ENCODE measurements at regions of chr9 and their contacts with region 1.

Region 1: GRCh38 chr9:96654443-96655197 is 497 bp downstream of the PRXL2C start:
- DNase-seq: peak; percentile 65 to 94 (median 86)
- ATAC-seq: peak; percentile 89
- H3K4me3 ChIP-seq: peak overlapping the region; percentile 62
- H3K4me3 Mint-ChIP-seq: peak overlapping the region; percentile 88 to 98 (median 93)
- H3K27ac ChIP-seq: peak overlapping the region; percentile 87
- H3K27ac Mint-ChIP-seq: peak overlapping the region; percentile 88 to 98 (median 97)
- H3K4me1 ChIP-seq: peaks cover 0 to 14% of the 10 kb centered on the region in 2 donors
- H3K4me1 Mint-ChIP-seq: peaks cover 0 to 33% (median 21%) of the 10 kb centered on the region in 7 donors
- H3K27me3 ChIP-seq: no peaks in the 10 kb centered on the region
- H3K27me3 Mint-ChIP-seq: peaks cover 0 to 23% (median 0%) of the 10 kb centered on the region in 5 donors

Region 2: DNA sequence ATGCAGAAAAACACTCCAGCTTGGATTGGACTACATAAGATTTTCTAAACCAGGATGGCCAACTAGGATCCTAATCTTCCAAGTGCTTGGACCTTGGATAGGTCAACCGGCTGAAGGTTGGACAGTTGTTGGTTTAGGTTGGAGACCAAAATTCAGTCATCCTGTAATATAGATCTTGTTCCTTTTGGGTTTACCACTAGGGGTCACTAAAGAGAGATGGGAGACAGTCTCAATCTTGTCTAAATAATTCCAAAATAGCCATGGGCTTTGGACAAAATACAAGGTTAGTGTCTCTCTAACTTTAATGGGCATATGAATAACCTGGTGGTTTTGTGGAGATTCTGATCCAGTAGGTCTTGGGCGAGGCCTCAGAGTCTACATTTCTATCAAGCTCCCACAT is 927.9 kb before region 1 on chr9:
- CTCF ChIA-PET with region 1: no interaction called
- POLR2A ChIA-PET with region 1: no interaction called
- intact Hi-C with region 1: loop called in 1 of 2 experiments (anchors 10 kb)
- DNase-seq: peak in 1 of 9 donors; percentile 31
- ATAC-seq: no peak
- H3K4me3 ChIP-seq: no peak overlapping the region
- H3K4me3 Mint-ChIP-seq: peak overlapping the region in 1 of 10 donors; percentile 20
- H3K27ac ChIP-seq: no peak overlapping the region
- H3K27ac Mint-ChIP-seq: no peak overlapping the region
- H3K4me1 ChIP-seq: peaks cover 18 to 24% of the 10 kb centered on the region in 2 donors
- H3K4me1 Mint-ChIP-seq: peaks cover 33 to 58% (median 49%) of the 10 kb centered on the region in 7 donors
- H3K27me3 ChIP-seq: no peaks in the 10 kb centered on the region
- H3K27me3 Mint-ChIP-seq: peaks cover 0 to 31% (median 0%) of the 10 kb centered on the region in 5 donors

Region 3: GRCh38 chr9:96241391-96241809 is 413.2 kb before region 1 on chr9:
- CTCF ChIA-PET with region 1: no interaction called
- POLR2A ChIA-PET with region 1: no interaction called
- intact Hi-C with region 1: loop called in 1 of 2 experiments (anchors 5 kb)
- DNase-seq: peak in 1 of 9 donors; percentile 65
- ATAC-seq: peak; percentile 46
- H3K4me3 ChIP-seq: no peak overlapping the region
- H3K4me3 Mint-ChIP-seq: peak overlapping the region in 1 of 10 donors; percentile 17
- H3K27ac ChIP-seq: no peak overlapping the region
- H3K27ac Mint-ChIP-seq: peak overlapping the region in 1 of 9 donors; percentile 49
- H3K4me1 ChIP-seq: peaks cover 0 to 15% of the 10 kb centered on the region in 2 donors
- H3K4me1 Mint-ChIP-seq: peaks cover 0 to 16% (median 4%) of the 10 kb centered on the region in 7 donors
- H3K27me3 ChIP-seq: peaks cover 0 to 13% of the 10 kb centered on the region in 2 donors
- H3K27me3 Mint-ChIP-seq: peaks cover 17 to 72% (median 27%) of the 10 kb centered on the region in 5 donors

Region 4: GRCh38 chr9:96418074-96418809 is 236.4 kb before region 1 on chr9 and contains the start of gene ZNF367:
- CTCF ChIA-PET with region 1: no interaction called
- POLR2A ChIA-PET with region 1: no interaction called
- intact Hi-C with region 1: loop called (anchors 1 kb)
- DNase-seq: peak; percentile 75 to 94 (median 82)
- ATAC-seq: peak; percentile 85
- H3K4me3 ChIP-seq: peak within 1 kb of the TSS; percentile 94
- H3K4me3 Mint-ChIP-seq: peak within 1 kb of the TSS; percentile 88 to 98 (median 92)
- H3K27ac ChIP-seq: peak within 1 kb of the TSS; percentile 98
- H3K27ac Mint-ChIP-seq: peak within 1 kb of the TSS; percentile 92 to 98 (median 96)
- H3K4me1 ChIP-seq: peaks cover 19 to 31% of the 10 kb centered on the region in 2 donors
- H3K4me1 Mint-ChIP-seq: peaks cover 21 to 39% (median 31%) of the 10 kb centered on the region in 7 donors
- H3K27me3 ChIP-seq: no peaks in the 10 kb centered on the region
- H3K27me3 Mint-ChIP-seq: no peaks in the 10 kb centered on the region
- total RNA-seq, gene ZNF367: 3.8 to 22.9 (median 5.5) TPM

Region 5: GRCh38 chr9:96449845-96450612 is 204.6 kb before region 1 on chr9 and contains the start of gene HABP4:
- CTCF ChIA-PET with region 1: no interaction called
- POLR2A ChIA-PET with region 1: interaction called, 3 read pairs
- intact Hi-C with region 1: loop called in 1 of 2 experiments (anchors 1 kb)
- DNase-seq: peak; percentile 90 to 97 (median 95)
- ATAC-seq: peak; percentile 98
- H3K4me3 ChIP-seq: peak within 1 kb of the TSS; percentile 77
- H3K4me3 Mint-ChIP-seq: peak within 1 kb of the TSS; percentile 88 to 99 (median 93)
- H3K27ac ChIP-seq: peak within 1 kb of the TSS; percentile 74
- H3K27ac Mint-ChIP-seq: peak within 1 kb of the TSS; percentile 74 to 98 (median 94)
- H3K4me1 ChIP-seq: peaks cover 5 to 14% of the 10 kb centered on the region in 2 donors
- H3K4me1 Mint-ChIP-seq: peaks cover 19 to 33% (median 26%) of the 10 kb centered on the region in 7 donors
- H3K27me3 ChIP-seq: no peaks in the 10 kb centered on the region
- H3K27me3 Mint-ChIP-seq: peaks cover 0 to 41% (median 6%) of the 10 kb centered on the region in 5 donors
- total RNA-seq, gene HABP4: 6.6 to 40.3 (median 23.9) TPM

Region 6: DNA sequence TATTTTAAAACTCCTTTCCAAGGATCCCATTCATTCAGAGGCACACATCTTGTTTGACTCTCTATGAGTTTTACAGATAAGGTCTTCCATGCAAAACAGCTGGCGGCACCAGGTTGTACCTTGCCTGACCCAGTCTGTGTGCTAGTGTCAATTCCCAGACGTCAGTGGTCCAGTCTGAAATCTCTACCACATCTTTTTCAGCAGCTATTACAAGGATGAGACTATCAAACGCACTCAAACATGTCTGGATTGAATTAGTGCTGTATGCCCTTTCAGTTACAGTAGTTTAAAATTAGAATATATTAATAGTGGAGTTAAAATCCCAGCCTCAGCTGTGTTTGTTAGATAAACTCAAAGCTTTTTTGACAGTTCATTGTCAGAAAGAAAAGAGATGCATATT is 46.6 kb before region 1 on chr9:
- CTCF ChIA-PET with region 1: no interaction called
- POLR2A ChIA-PET with region 1: no interaction called
- intact Hi-C with region 1: no loop called
- DNase-seq: no peak
- ATAC-seq: no peak
- H3K4me3 ChIP-seq: no peak overlapping the region
- H3K4me3 Mint-ChIP-seq: no peak overlapping the region
- H3K27ac ChIP-seq: no peak overlapping the region
- H3K27ac Mint-ChIP-seq: no peak overlapping the region
- H3K4me1 ChIP-seq: no peaks in the 10 kb centered on the region
- H3K4me1 Mint-ChIP-seq: no peaks in the 10 kb centered on the region
- H3K27me3 ChIP-seq: no peaks in the 10 kb centered on the region
- H3K27me3 Mint-ChIP-seq: peaks cover 33 to 46% (median 38%) of the 10 kb centered on the region in 5 donors

Region 7: DNA sequence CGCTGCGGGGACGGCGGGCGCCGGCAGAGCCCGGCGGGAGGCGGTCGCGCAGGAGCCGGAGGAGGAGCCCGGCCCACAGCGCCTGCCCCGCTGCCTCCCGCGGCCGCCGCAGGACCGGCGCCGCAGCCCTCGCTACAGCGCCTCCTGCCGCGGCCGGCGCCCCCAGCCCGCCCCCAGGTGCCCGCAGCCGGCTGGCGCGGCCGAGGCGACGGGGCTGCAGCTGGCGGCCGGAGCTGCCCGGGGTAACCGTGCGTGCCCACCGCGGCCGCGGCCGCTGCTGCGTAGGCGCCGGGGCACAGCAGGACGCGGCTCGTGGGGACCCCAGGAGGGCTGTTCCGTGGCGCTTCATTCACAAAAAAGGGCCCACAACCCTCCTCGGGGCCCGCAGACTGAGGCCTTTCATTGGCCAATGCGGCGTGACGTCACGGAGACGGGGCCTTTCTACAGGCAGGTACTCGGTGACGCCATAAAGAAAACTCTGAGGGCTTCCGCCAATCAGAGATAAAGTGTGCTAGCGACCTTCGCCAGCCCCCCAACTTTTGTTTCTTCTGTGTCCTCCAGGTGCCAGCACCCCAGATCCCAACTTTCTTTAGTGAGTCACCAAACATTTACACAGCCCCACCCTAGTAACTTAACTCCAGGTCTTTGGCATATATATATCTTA is 35.0 kb before region 1 on chr9 and contains the start of gene CDC14B:
- CTCF ChIA-PET with region 1: no interaction called
- POLR2A ChIA-PET with region 1: no interaction called
- intact Hi-C with region 1: loop called (anchors 1 kb)
- DNase-seq: peak; percentile 42 to 84 (median 62)
- ATAC-seq: peak; percentile 83
- H3K4me3 ChIP-seq: peak within 1 kb of the TSS; percentile 51
- H3K4me3 Mint-ChIP-seq: peak within 1 kb of the TSS; percentile 59 to 85 (median 78)
- H3K27ac ChIP-seq: no peak within 1 kb of the TSS
- H3K27ac Mint-ChIP-seq: peak within 1 kb of the TSS in 5 of 9 donors; percentile 17 to 71 (median 38)
- H3K4me1 ChIP-seq: peaks cover 0 to 8% of the 10 kb centered on the region in 2 donors
- H3K4me1 Mint-ChIP-seq: peaks cover 0 to 20% (median 5%) of the 10 kb centered on the region in 7 donors
- H3K27me3 ChIP-seq: peaks cover 2 to 4% of the 10 kb centered on the region in 2 donors
- H3K27me3 Mint-ChIP-seq: peaks cover 24 to 60% (median 52%) of the 10 kb centered on the region in 5 donors
- total RNA-seq, gene CDC14B: 0.41 to 16.5 (median 9.4) TPM

Region 8: DNA sequence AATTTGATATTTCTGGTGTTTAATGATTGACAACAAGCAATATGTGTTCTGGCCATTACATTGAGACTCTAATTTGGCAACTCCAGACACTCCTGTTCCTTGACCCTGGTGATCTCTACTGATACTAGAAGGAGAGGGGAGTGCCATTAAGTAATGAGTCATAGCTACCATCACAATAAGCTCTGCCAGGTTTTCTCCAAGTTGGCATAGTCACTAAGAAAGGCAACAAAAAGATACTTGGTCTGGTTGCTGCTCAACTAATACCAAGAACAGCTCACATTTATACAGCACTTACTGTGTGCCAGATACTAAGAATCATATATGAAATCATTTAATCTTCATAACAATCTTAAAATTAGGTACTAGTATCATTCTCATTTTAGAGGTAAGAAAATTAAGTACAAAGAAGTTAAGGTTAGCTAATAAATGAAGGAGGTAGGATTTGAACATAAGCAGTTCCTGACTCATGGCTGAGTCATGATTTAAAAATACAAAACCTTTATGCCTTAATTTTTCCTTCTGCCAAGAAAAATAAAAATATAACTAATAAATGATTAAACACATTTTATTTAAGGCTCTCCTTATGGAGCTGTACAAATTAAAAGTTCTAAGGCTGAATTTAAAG is 20.4 kb after region 1 on chr9:
- CTCF ChIA-PET with region 1: no interaction called
- POLR2A ChIA-PET with region 1: no interaction called
- intact Hi-C with region 1: no loop called
- DNase-seq: no peak
- ATAC-seq: no peak
- H3K4me3 ChIP-seq: no peak overlapping the region
- H3K4me3 Mint-ChIP-seq: no peak overlapping the region
- H3K27ac ChIP-seq: no peak overlapping the region
- H3K27ac Mint-ChIP-seq: no peak overlapping the region
- H3K4me1 ChIP-seq: no peaks in the 10 kb centered on the region
- H3K4me1 Mint-ChIP-seq: no peaks in the 10 kb centered on the region
- H3K27me3 ChIP-seq: no peaks in the 10 kb centered on the region
- H3K27me3 Mint-ChIP-seq: peaks cover 0 to 19% (median 16%) of the 10 kb centered on the region in 5 donors

Region 9: GRCh38 chr9:96777426-96777864 is 122.8 kb after region 1 on chr9:
- CTCF ChIA-PET with region 1: interaction called, 3 read pairs
- POLR2A ChIA-PET with region 1: no interaction called
- intact Hi-C with region 1: loop called in 1 of 2 experiments (anchors 10 kb)
- DNase-seq: peak in 5 of 9 donors; percentile 18 to 47 (median 29)
- ATAC-seq: peak; percentile 28
- H3K4me3 ChIP-seq: peak overlapping the region; percentile 84
- H3K4me3 Mint-ChIP-seq: peak overlapping the region; percentile 91 to 100 (median 98)
- H3K27ac ChIP-seq: peak overlapping the region; percentile 92
- H3K27ac Mint-ChIP-seq: peak overlapping the region; percentile 94 to 100 (median 98)
- H3K4me1 ChIP-seq: peaks cover 6 to 12% of the 10 kb centered on the region in 2 donors
- H3K4me1 Mint-ChIP-seq: peaks cover 12 to 64% (median 58%) of the 10 kb centered on the region in 7 donors
- H3K27me3 ChIP-seq: no peaks in the 10 kb centered on the region
- H3K27me3 Mint-ChIP-seq: no peaks in the 10 kb centered on the region

Region 10: DNA sequence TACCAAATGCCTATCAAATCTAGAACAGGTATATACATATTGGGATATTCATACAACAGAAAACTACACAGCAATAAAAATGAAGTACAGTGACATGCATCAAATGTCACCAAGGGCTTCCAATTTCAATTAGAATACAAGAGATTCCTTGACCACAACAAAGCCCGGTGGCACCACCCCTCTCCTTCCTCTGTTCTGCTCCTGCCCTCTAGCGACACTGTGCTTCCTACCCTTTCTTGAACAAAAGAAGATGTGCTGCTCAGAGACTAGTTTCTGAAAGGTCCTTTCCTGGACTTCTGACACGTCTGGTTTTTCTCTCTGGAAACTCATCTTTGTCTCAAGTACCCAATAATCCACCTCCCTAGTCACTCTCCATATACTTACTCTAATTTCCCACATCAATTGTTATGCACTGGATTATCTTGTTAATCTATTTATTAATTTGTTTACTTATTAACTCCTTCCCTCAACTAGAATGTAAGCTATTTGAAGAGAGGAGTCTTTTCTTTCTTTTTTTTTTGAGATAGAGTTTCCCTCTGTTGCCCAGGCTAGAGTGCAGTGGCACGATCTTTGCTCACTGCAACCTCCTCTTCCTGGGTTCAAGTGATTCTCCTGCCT is 454.7 kb after region 1 on chr9:
- CTCF ChIA-PET with region 1: no interaction called
- POLR2A ChIA-PET with region 1: no interaction called
- intact Hi-C with region 1: no loop called
- DNase-seq: peak in 2 of 9 donors; percentile 7 to 19
- ATAC-seq: peak; percentile 45
- H3K4me3 ChIP-seq: no peak overlapping the region
- H3K4me3 Mint-ChIP-seq: no peak overlapping the region
- H3K27ac ChIP-seq: no peak overlapping the region
- H3K27ac Mint-ChIP-seq: no peak overlapping the region
- H3K4me1 ChIP-seq: no peaks in the 10 kb centered on the region
- H3K4me1 Mint-ChIP-seq: peaks cover 0 to 6% (median 4%) of the 10 kb centered on the region in 7 donors
- H3K27me3 ChIP-seq: no peaks in the 10 kb centered on the region
- H3K27me3 Mint-ChIP-seq: peaks cover 0 to 11% (median 7%) of the 10 kb centered on the region in 5 donors